Activated CD8-positive, alpha-beta T cell treated with anti-CD3 and anti-CD28 coated beads, Interleukin-2, amount 10 ng/mL, durations not matched to agents 7 days and 5 days (primary cell): ENCODE measurements at regions of chr16 and their contacts with region 1.

Region 1: GRCh38 chr16:57600048-57600835 is 28.2 kb upstream of the ADGRG1 start:
- DNase-seq: peak; percentile 44
- ATAC-seq: peak; percentile 16
- H3K4me3 Mint-ChIP-seq: peak overlapping the region; percentile 8
- H3K27ac Mint-ChIP-seq: peak overlapping the region; percentile 99
- H3K4me1 Mint-ChIP-seq: peaks cover 67% of the 10 kb centered on the region
- H3K27me3 Mint-ChIP-seq: no peaks in the 10 kb centered on the region

Region 2: GRCh38 chr16:57639172-57639887 is 39.1 kb after region 1 on chr16:
- CTCF ChIA-PET with region 1: interaction called, 13 read pairs
- POLR2A ChIA-PET with region 1: interaction called, 4 read pairs
- DNase-seq: peak; percentile 32
- ATAC-seq: peak; percentile 62
- H3K4me3 Mint-ChIP-seq: no peak overlapping the region
- H3K27ac Mint-ChIP-seq: no peak overlapping the region
- H3K4me1 Mint-ChIP-seq: peaks cover 6% of the 10 kb centered on the region
- H3K27me3 Mint-ChIP-seq: peaks cover 11% of the 10 kb centered on the region